ENCODE measurements at regions of chr6 and their contacts with region 1.

Region 1: GRCh38 chr6:33896391-33897183 is 92.8 kb upstream of the MLN start:
- DNase-seq: no peak

Region 2: GRCh38 chr6:33794891-33795623 is 101.5 kb before region 1 on chr6:
- intact Hi-C with region 1: loop called in 1 of 2 experiments (anchors 10 kb)
- DNase-seq: no peak

Region 3: GRCh38 chr6:34876472-34876871 is 979.9 kb after region 1 on chr6:
- intact Hi-C with region 1: no loop called
- DNase-seq: no peak